ENCODE measurements at regions of chr1 and their contacts with region 1.

Region 1: DNA sequence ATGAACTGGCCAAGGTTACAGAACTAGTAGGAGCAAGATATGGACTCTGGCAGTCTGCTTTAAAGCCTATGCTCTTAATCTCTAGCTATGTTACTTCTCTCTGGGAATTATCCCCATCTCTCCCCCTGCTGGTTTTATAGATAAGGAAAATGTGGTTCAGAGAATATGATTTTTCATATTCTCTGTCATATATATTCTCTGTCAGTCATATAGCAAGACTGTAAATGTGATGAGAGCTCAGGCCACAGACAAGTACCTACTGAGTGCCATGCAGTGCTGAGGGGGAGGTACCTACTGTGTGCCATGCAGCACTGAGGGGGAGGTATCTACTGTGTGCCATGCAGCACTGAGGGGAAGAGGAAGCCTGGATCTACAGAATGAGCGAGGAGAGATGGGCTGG is 220.3 kb upstream of the FGGY start:
- DNase-seq: no peak
- H3K4me3 Mint-ChIP-seq: no peak overlapping the region
- H3K27ac Mint-ChIP-seq: no peak overlapping the region
- H3K4me1 Mint-ChIP-seq: peaks cover 32% of the 10 kb centered on the region
- H3K27me3 Mint-ChIP-seq: no peaks in the 10 kb centered on the region
- CTCF ChIP-seq: no peak

Region 2: GRCh38 chr1:58932859-58933598 is 143.6 kb before region 1 on chr1:
- CTCF ChIA-PET with region 1: no interaction called
- intact Hi-C with region 1: loop called (anchors 10 kb)
- DNase-seq: peak; percentile 96
- H3K4me3 Mint-ChIP-seq: no peak overlapping the region
- H3K27ac Mint-ChIP-seq: peak overlapping the region; percentile 83
- H3K4me1 Mint-ChIP-seq: peaks cover 73% of the 10 kb centered on the region
- H3K27me3 Mint-ChIP-seq: no peaks in the 10 kb centered on the region
- CTCF ChIP-seq: no peak

Region 3: DNA sequence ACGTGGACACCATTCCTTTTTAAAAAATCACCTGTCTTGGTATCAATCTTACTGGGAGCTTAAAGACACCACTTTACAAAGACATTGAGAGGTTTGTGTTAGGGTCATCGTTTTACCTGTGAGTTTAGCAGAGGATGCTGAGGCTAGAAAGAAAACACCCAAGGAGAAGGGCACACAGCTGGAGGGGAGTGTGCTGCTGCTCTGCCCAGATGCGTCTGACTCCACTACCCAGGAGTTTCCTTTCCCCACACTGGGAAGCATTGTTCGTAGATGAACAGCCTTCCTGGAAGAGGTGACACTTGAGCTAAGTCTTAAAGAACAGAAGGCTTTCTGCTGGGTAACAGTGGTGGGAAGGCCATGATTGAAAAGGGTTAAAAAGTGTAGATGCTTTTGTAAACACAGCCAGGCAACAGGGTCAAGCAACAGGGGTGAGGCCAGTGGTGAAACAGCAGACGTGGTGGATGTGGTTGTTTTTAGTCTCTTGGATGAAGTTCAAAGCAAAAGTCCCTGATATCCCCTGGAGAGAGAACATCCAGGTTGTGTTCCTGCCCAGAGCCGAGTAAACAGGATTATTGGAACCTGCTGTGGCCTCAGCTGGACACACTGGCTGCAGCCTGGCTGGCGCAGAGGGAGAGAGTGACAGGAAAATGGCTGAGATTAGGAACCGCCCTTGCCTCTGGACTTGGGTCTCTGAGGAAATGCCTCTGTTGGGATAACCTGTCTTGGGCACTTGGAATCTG is 94.2 kb before region 1 on chr1:
- CTCF ChIA-PET with region 1: no interaction called
- intact Hi-C with region 1: loop called (anchors 5 kb)
- DNase-seq: no peak
- H3K4me3 Mint-ChIP-seq: no peak overlapping the region
- H3K27ac Mint-ChIP-seq: no peak overlapping the region
- H3K4me1 Mint-ChIP-seq: no peaks in the 10 kb centered on the region
- H3K27me3 Mint-ChIP-seq: no peaks in the 10 kb centered on the region
- CTCF ChIP-seq: no peak